Body of pancreas (tissue), 4 donors: ENCODE measurements at regions of chr3 and their contacts with region 1.

Region 1: DNA sequence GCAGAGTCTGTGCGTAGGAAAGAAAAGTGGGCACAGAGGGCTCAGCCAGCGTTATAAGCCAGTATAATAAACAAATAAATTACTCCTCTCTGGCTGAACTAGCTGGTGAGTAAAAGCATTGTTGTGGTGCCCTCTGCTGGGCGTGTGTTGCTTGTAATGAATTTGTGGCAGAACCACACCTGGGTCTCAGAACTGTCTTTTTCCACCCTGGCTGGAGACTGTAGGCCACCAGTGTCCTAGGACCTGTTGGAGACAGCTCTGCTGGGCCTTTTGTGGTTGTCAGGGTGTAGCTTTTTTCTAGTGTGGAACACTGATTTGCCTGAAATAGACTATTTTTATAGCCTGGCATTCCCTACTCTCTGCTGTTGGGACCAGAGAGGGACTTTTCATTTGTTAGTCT is 130.5 kb upstream of the EIF1B start:
- DNase-seq: peak; percentile 77 to 86 (median 80)
- ATAC-seq: peak; percentile 68
- H3K4me3 ChIP-seq: no peak overlapping the region
- H3K27ac ChIP-seq: no peak overlapping the region
- H3K4me1 ChIP-seq: no peaks in the 10 kb centered on the region
- H3K27me3 ChIP-seq: no peaks in the 10 kb centered on the region
- CTCF ChIP-seq: peak; percentile 38 to 77 (median 67)
- POLR2A ChIP-seq: no peak

Region 2: DNA sequence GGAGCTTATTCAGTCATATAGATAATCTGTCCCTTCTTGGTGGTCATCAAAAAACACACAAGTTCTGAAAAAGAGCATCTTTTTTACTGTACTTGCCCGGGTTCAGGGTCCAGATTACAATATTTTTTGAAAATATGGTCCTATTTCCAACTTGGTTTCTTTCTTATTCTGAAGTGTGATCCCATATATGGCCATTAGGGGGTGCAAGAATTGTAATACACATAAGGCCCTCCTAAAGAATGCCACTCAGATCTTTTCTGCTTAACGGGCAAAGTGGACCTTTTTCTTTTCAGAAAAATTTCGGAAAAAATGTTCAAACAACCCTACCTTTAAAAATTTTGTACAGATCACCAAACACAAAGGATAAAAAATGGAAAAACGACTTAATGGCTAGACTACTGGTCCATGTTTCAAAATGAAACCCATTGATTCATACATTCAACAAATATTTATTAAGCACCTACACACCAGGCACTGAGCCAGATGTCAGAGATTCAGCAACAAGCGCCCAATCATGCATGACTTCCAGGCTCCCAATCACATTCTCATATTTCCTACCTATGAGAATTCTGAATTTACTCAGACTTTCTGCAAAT is 471.6 kb before region 1 on chr3:
- intact Hi-C with region 1: loop called (anchors 10 kb)
- DNase-seq: peak in 1 of 4 donors; percentile 13
- ATAC-seq: peak; percentile 52
- H3K4me3 ChIP-seq: no peak overlapping the region
- H3K27ac ChIP-seq: no peak overlapping the region
- H3K4me1 ChIP-seq: no peaks in the 10 kb centered on the region
- H3K27me3 ChIP-seq: no peaks in the 10 kb centered on the region
- CTCF ChIP-seq: peak; percentile 48 to 75 (median 66)
- POLR2A ChIP-seq: no peak

Region 3: DNA sequence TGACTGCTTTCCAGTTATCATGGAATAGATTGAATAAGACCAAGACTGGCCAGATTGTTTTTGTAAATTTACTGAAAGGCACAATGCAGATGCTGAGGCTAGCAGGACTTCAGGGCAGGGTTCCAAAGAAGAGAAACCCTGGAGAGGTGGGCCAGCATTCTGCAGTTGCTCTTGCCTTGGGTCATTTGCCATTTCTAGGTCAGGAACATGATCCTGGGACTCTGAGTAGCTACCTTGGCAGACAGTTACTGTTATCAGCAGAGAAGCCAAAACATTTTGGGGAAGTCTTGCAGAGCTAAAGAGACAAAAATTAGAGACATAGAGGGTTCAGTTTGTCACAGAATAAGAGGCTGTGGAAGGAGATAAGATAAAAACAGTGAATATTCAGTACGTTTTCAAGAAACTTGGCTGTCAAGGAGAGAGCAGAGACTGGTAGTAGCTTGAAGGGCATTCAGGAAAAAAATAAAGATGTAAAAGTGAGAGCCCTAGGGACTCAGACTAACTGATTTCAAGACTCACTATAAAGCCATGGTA is 416.4 kb before region 1 on chr3:
- intact Hi-C with region 1: no loop called
- DNase-seq: no peak
- ATAC-seq: no peak
- H3K4me3 ChIP-seq: no peak overlapping the region
- H3K27ac ChIP-seq: no peak overlapping the region
- H3K4me1 ChIP-seq: no peaks in the 10 kb centered on the region
- H3K27me3 ChIP-seq: no peaks in the 10 kb centered on the region
- CTCF ChIP-seq: no peak
- POLR2A ChIP-seq: no peak

Region 4: GRCh38 chr3:40292637-40293349 is 113.8 kb after region 1 on chr3:
- intact Hi-C with region 1: no loop called
- DNase-seq: no peak
- ATAC-seq: no peak
- H3K4me3 ChIP-seq: no peak overlapping the region
- H3K27ac ChIP-seq: no peak overlapping the region
- H3K4me1 ChIP-seq: no peaks in the 10 kb centered on the region
- H3K27me3 ChIP-seq: no peaks in the 10 kb centered on the region
- CTCF ChIP-seq: no peak
- POLR2A ChIP-seq: no peak